Activated CD4-positive, alpha-beta memory T cell treated with anti-CD3 and anti-CD28 coated beads for 36 hours (primary cell): ENCODE measurements at regions of chr17 and their contacts with region 1.

Region 1: GRCh38 chr17:76726231-76726775 is at the start of gene JMJD6:
- DNase-seq: peak; percentile 98
- H3K4me3 Mint-ChIP-seq: peak within 1 kb of the TSS; percentile 96
- H3K27ac Mint-ChIP-seq: peak within 1 kb of the TSS; percentile 95
- H3K4me1 Mint-ChIP-seq: peaks cover 46% of the 10 kb centered on the region
- H3K27me3 Mint-ChIP-seq: no peaks in the 10 kb centered on the region
- total RNA-seq, gene JMJD6: 53.4 to 56.6 TPM

Region 2: DNA sequence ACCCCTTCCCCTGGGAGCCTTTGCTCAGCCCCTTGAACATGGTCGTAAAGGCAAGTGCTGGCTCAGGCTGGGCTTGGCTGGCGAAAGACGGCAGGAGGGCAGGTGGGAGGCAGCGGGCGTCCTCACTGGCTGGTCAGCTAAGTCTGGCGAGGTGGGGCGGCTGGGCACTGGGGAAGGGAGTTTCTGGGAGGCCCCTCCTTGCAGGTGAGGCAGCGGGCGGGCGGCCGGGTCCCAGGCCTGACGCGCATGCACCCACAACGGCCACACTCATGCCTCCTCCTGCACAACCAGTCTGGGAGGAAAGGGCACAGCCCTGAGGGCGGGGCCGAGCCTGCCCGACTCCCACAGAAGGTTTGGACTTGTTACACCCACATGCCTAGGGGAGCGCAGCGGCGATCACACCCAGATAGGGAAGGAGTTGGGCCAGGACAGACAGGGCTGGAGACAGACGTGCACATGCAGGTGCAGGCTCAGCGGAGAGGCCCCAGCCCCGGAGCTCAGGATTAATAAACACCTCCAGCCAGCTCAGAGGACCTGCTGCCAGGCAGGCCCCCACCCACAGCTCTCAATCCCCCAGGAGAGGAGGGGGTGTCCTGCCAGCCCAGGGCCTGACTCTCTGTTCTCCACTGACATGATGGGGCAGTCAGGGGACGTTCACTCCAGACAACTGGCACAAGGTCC is 699.0 kb before region 1 on chr17 and contains the start of gene EVPL:
- CTCF ChIA-PET with region 1: no interaction called
- POLR2A ChIA-PET with region 1: no interaction called
- intact Hi-C with region 1: no loop called
- DNase-seq: no peak
- H3K4me3 Mint-ChIP-seq: no peak within 1 kb of the TSS
- H3K27ac Mint-ChIP-seq: no peak within 1 kb of the TSS
- H3K4me1 Mint-ChIP-seq: peaks cover 10% of the 10 kb centered on the region
- H3K27me3 Mint-ChIP-seq: no peaks in the 10 kb centered on the region
- total RNA-seq, gene EVPL: 0.02 TPM in 1 of 2 experiments, not detected in the other

Region 3: DNA sequence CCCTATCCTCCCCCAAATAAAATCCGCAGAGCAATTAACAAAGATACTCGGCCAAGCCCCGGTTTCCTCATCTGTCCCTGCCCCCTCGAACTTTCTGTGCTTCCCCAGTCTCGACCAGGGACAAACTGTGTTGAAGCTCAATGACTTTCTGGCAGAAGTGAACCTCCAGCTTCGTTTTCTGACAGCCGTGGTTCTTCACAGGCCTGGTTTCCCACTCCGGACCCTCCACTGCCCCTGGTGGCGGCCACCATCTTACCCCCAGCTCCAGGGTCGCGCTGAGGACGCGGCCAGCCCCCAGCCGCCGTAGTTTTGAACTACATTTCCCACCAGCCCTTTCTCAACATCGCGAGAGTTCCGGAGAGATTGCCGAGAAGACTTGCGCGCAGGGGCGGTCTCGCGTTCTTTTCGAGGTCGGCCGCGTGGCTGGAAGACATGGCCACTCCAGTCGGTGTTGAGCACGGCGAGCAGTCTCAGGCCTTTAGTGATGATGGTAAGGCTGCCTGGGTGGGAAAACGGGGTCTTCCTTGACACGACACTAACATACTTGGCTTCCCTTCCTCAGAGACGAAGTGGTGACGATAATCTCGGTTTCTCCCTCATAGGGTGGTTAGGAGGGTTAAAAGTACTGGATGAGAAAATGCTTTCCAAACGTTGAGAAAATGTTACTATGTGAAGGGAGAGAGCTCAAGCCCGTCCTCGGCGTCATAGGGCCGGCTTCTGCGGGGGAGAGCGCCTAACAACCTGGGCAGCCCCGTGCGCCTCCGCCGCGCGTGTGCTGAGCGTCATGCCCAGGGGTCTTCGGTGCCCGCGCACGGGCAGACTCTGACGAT is 168.7 kb before region 1 on chr17:
- CTCF ChIA-PET with region 1: interaction called, 4 read pairs
- POLR2A ChIA-PET with region 1: interaction called, 5 read pairs
- intact Hi-C with region 1: loop called (anchors 5 kb)
- DNase-seq: peak; percentile 96
- H3K4me3 Mint-ChIP-seq: peak overlapping the region; percentile 97
- H3K27ac Mint-ChIP-seq: peak overlapping the region; percentile 99
- H3K4me1 Mint-ChIP-seq: peaks cover 48% of the 10 kb centered on the region
- H3K27me3 Mint-ChIP-seq: no peaks in the 10 kb centered on the region

Region 4: GRCh38 chr17:76714822-76715495 is 11.3 kb before region 1 on chr17:
- CTCF ChIA-PET with region 1: interaction called, 21 read pairs
- POLR2A ChIA-PET with region 1: interaction called, 13 read pairs
- intact Hi-C with region 1: no loop called
- DNase-seq: peak; percentile 79
- H3K4me3 Mint-ChIP-seq: no peak overlapping the region
- H3K27ac Mint-ChIP-seq: peak overlapping the region; percentile 24
- H3K4me1 Mint-ChIP-seq: peaks cover 29% of the 10 kb centered on the region
- H3K27me3 Mint-ChIP-seq: no peaks in the 10 kb centered on the region

Region 5: DNA sequence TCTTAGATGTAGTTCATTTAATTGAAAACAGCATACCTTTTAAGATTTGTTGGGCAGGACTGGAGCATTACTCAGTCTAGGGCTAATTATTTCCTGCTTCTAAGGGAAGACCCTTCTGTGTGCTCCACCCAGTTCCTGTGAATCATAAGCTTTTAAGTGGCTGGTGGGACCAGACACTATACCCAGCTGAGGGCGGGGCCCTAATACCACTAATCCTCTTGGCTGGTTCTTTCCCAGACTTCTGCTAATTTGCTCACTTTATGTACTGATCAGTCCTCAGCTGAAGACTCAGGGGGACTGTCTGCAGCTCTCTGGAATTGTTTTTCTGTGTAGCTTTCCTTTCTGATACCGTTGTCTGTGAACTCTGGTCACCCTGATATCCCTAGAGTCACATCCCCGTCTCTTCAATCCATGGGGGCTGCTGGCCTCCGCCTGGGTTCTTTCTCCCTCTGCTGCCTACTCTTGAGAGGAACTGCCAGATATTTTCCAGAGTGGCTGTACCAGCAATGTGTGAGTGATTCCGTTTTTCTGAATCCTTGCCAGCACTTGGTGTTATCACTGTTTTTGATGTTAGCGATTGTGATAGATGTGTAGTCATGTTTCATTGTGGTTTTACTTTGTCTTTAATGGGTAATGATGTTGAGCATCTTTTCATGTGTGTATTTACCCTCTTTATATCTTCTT is 46.7 kb after region 1 on chr17:
- CTCF ChIA-PET with region 1: interaction called, 5 read pairs
- POLR2A ChIA-PET with region 1: no interaction called
- intact Hi-C with region 1: loop called (anchors 1 kb)
- DNase-seq: peak; percentile 71
- H3K4me3 Mint-ChIP-seq: peak overlapping the region; percentile 67
- H3K27ac Mint-ChIP-seq: peak overlapping the region; percentile 92
- H3K4me1 Mint-ChIP-seq: peaks cover 23% of the 10 kb centered on the region
- H3K27me3 Mint-ChIP-seq: no peaks in the 10 kb centered on the region

Region 6: DNA sequence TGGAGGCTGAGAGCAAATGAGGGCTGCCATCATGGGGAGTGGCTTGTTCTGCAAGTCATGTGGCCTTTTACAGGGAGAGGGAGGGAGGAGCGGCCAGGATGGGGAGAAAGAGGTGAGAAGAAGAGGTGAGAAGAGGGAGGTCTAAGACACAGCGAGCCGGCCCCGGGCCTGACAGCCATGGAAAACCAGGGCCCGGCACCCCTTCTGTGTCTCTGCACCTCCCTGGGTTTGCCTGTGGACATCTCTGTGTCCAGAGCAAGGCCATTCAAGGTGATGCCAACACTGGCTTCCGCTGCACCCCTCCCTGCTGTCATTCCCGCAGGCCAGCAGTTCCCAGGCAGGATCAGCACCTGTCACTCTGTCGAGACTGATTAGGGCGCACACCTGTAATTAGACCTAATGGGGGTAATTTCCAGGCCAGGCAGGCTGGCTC is 217.5 kb after region 1 on chr17:
- CTCF ChIA-PET with region 1: no interaction called
- POLR2A ChIA-PET with region 1: no interaction called
- intact Hi-C with region 1: no loop called
- DNase-seq: no peak
- H3K4me3 Mint-ChIP-seq: no peak overlapping the region
- H3K27ac Mint-ChIP-seq: no peak overlapping the region
- H3K4me1 Mint-ChIP-seq: no peaks in the 10 kb centered on the region
- H3K27me3 Mint-ChIP-seq: no peaks in the 10 kb centered on the region

Region 7: DNA sequence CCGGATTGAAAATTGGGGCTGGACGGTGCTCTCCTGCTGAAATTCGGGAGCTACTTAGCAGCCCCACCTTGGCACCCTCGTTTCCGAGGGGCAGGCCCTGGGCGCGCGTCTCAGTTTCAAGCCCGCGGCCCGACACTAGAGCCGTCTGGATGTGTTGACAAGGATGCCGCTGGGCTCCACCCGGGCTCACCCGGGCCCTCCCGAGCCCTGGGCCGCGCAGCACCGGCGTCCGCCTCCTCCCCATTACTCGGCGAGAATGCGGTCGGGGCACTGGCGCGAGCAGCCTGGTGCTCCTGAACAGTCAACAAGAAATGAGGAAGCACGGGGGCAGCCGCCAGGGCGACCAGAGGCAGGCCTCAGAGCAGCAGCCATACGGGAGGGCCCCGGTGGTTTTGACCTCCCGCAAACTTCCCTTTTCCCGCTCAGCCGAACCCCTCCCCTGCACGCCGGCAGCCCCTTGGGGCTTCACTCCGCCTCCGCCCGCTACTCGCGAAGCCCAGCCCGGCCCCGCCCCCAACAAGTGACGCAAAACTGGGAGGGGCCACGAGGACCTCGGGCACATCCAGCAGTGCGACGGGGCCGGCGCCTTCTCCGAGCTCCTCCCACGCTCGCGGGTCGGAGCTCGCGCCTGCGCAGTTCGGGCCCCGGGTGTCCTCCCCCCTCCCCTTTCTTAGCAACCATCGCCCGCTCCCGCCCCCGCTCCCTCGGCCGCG is 414.0 kb after region 1 on chr17:
- CTCF ChIA-PET with region 1: no interaction called
- POLR2A ChIA-PET with region 1: no interaction called
- intact Hi-C with region 1: loop called (anchors 1 kb)
- DNase-seq: peak; percentile 100
- H3K4me3 Mint-ChIP-seq: peak overlapping the region; percentile 69
- H3K27ac Mint-ChIP-seq: peak overlapping the region; percentile 98
- H3K4me1 Mint-ChIP-seq: peaks cover 52% of the 10 kb centered on the region
- H3K27me3 Mint-ChIP-seq: no peaks in the 10 kb centered on the region